ENCODE measurements at regions of chr1 and their contacts with region 1.

Region 1: GRCh38 chr1:161021165-161021960 is 411 bp upstream of the F11R start:
- DNase-seq: peak; percentile 76
- H3K4me3 Mint-ChIP-seq: peak overlapping the region; percentile 91
- H3K27ac Mint-ChIP-seq: peak overlapping the region; percentile 78
- H3K4me1 Mint-ChIP-seq: peaks cover 35% of the 10 kb centered on the region
- H3K27me3 Mint-ChIP-seq: peaks cover 2% of the 10 kb centered on the region

Region 2: DNA sequence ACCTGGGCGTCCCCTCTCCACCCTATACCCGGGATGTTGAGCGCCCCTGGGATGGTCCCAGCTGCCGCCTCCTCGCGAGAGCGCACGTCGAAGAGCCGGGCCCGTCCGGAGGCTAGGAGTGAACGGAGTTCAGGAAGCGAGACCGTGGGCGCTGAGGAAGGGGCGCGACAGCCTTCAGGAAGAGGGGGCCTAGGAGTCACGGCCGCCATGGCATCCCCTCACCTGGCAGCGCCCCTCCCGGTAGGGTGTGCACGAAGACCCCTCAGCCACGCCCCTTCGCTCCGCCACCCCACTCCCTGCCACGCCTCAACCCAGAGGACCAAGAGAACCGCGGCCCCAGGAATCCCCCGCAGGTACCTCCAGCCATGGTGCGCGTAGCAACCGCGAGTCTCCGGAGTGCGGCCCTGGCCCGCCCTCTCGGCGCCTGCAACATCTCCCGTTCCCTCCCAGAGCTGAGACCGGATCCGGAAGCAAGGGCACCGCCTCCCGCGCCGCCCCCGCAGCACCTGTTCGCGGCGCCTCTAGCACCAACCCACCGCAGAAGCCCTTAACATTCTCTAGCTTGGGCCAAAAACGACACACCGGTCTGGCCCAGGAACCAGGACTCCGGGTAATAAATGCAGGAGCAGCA is 17.3 kb after region 1 on chr1 and contains the start of gene TSTD1:
- intact Hi-C with region 1: loop called (anchors 1 kb)
- DNase-seq: peak; percentile 83
- H3K4me3 Mint-ChIP-seq: peak within 1 kb of the TSS; percentile 89
- H3K27ac Mint-ChIP-seq: peak within 1 kb of the TSS; percentile 93
- H3K4me1 Mint-ChIP-seq: peaks cover 42% of the 10 kb centered on the region
- H3K27me3 Mint-ChIP-seq: no peaks in the 10 kb centered on the region
- total RNA-seq, gene TSTD1: 40.5 and 43.3 TPM in 2 replicates

Measured in activated T-helper 1 cell treated with anti-CD3 and anti-CD28 coated beads, Interleukin-12 subunit alpha, Interleukin-12 subunit beta, Interleukin-2, Interleukin-4 antibody, amounts not matched to agents 30 ng/mL and 10 ng/mL and 1 ng/mL, durations not matched to agents 14 hours and 24 hours and 36 hours (primary cell).